Right cardiac atrium (tissue), 5 donors: ENCODE measurements at regions of chr2 and their contacts with region 1.

Region 1: GRCh38 chr2:190781604-190782198 is 98.9 kb upstream of the GLS start:
- DNase-seq: peak in 1 of 3 donors; percentile 19
- ATAC-seq: peak; percentile 64 to 70
- H3K4me3 ChIP-seq: no peak overlapping the region
- H3K27ac ChIP-seq: no peak overlapping the region
- H3K4me1 ChIP-seq: no peaks in the 10 kb centered on the region
- H3K27me3 ChIP-seq: no peaks in the 10 kb centered on the region

Region 2: GRCh38 chr2:190804182-190804795 is 22.6 kb after region 1 on chr2:
- intact Hi-C with region 1: loop called in 1 of 4 experiments (anchors 2 kb)
- DNase-seq: no peak
- ATAC-seq: no peak
- H3K4me3 ChIP-seq: no peak overlapping the region
- H3K27ac ChIP-seq: no peak overlapping the region
- H3K4me1 ChIP-seq: no peaks in the 10 kb centered on the region
- H3K27me3 ChIP-seq: no peaks in the 10 kb centered on the region

Region 3: DNA sequence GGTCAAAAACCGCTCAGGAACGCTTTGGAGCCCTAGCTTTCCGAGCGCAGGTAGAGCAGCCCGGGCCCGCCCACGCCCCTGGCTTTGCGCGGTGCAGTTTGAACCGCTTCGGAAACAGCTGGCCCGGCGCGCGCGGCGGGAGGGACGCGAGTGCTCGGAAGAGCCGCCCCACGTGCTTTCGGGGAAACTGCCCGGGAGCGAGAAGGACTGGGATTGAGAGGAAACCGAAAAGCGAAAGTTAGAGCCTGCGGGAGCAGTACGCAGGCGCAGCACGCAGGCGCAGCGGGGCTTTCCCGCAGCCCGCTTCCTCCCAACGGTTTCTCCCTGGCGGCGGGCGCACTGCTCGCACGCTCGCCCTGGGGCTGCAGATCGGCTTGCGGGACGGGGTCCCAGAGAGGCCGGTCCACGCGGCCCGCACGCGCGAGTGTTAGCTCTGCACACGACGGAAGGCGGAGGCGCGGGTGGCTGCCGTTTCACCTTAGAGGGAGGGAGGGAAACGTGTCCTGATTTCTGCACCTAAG is 238.6 kb after region 1 on chr2:
- intact Hi-C with region 1: loop called in 1 of 4 experiments (anchors 10 kb)
- DNase-seq: peak; percentile 93 to 97 (median 97)
- ATAC-seq: peak; percentile 98 to 99
- H3K4me3 ChIP-seq: peak overlapping the region; percentile 85
- H3K27ac ChIP-seq: peak overlapping the region; percentile 94
- H3K4me1 ChIP-seq: peaks cover 3% of the 10 kb centered on the region
- H3K27me3 ChIP-seq: no peaks in the 10 kb centered on the region

Region 4: GRCh38 chr2:191030521-191031154 is 248.9 kb after region 1 on chr2:
- intact Hi-C with region 1: loop called in 3 of 4 experiments (anchors 5 to 10 kb)
- DNase-seq: no peak
- ATAC-seq: peak; percentile 59 to 69
- H3K4me3 ChIP-seq: no peak overlapping the region
- H3K27ac ChIP-seq: no peak overlapping the region
- H3K4me1 ChIP-seq: no peaks in the 10 kb centered on the region
- H3K27me3 ChIP-seq: no peaks in the 10 kb centered on the region